ENCODE measurements at regions of chr7 and their contacts with region 1.

Region 1: DNA sequence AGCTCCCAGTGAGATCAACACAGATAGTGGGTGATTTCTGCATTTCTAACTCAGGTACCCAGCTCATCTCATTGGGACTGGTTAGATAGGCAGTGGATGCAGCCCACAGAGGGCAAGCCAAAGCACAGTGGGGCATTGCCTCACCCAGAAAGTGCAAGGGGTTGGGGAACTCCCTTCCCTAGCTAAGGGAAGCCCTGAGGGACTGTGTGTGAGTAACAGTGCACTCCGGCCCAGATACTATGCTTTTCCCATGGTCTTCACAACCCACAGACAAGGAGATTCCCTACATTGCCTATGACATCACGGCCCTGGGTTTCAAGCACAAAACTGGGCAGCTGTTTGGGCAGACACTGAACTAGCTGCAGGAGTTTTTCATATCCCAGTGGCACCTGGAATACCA is 62.8 kb downstream of the PPP1R3A start:
- H3K4me3 ChIP-seq: no peak overlapping the region
- H3K27ac ChIP-seq: no peak overlapping the region
- H3K4me1 ChIP-seq: no peaks in the 10 kb centered on the region
- CTCF ChIP-seq: no peak

Region 2: DNA sequence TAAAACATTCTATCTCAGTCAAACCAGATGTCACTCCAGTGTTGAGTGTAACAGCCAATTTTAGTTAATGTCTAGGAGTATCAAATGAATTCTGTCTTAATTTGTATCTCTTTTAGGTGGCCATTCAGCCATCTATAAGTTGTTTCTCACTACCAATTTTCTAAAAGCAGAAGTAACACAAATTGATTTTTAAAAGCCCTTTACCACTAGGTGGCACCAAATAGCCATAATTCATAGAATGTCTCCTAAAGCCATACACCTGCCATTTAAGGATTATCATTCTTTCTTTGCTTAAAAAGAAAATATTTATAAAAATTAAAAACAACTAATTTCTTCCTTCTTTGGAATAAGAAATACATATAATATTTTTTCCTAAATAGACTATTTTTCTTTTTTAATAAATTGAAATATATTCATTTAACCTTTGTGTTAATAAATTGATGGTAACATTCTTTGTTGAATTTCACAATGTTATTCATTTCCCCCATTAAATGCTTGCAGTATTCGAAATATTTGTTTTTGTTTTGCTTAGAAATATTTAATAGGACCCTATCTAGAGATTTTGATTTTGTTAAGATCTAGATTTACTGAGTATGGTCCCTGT is 170.6 kb after region 1 on chr7:
- CTCF ChIA-PET with region 1: interaction called, 10 read pairs
- POLR2A ChIA-PET with region 1: no interaction called
- H3K4me3 ChIP-seq: no peak overlapping the region
- H3K27ac ChIP-seq: no peak overlapping the region
- H3K4me1 ChIP-seq: peaks cover 3% of the 10 kb centered on the region; the same call in 1 of the 2 replicates
- CTCF ChIP-seq: no peak